OCI-LY7 (cell line): ENCODE measurements at regions of chr6 and their contacts with region 1.

Region 1: GRCh38 chr6:150937132-150937889 is 71.8 kb downstream of the MTHFD1L start:
- DNase-seq: no peak
- H3K4me3 ChIP-seq: no peak overlapping the region
- H3K27ac ChIP-seq: no peak overlapping the region
- H3K4me1 ChIP-seq: no peaks in the 10 kb centered on the region
- CTCF ChIP-seq: no peak

Region 2: GRCh38 chr6:150977281-150977680 is 40.0 kb after region 1 on chr6:
- CTCF ChIA-PET with region 1: no interaction called
- POLR2A ChIA-PET with region 1: no interaction called
- intact Hi-C with region 1: loop called (anchors 5 kb)
- DNase-seq: no peak
- H3K4me3 ChIP-seq: no peak overlapping the region
- H3K27ac ChIP-seq: no peak overlapping the region
- H3K4me1 ChIP-seq: peaks cover 13% of the 10 kb centered on the region
- CTCF ChIP-seq: no peak

Region 3: GRCh38 chr6:151014404-151015100 is 77.2 kb after region 1 on chr6:
- CTCF ChIA-PET with region 1: no interaction called
- POLR2A ChIA-PET with region 1: no interaction called
- intact Hi-C with region 1: no loop called
- DNase-seq: peak; percentile 67
- H3K4me3 ChIP-seq: no peak overlapping the region
- H3K27ac ChIP-seq: no peak overlapping the region
- H3K4me1 ChIP-seq: no peaks in the 10 kb centered on the region
- CTCF ChIP-seq: peak; percentile 94